ENCODE measurements at regions of chr13 and their contacts with region 1.

Region 1: GRCh38 chr13:33004511-33004910 is 11.7 kb upstream of the KL start:
- DNase-seq: peak; percentile 32
- H3K4me3 ChIP-seq: no peak overlapping the region
- H3K27ac ChIP-seq: no peak overlapping the region
- H3K4me1 ChIP-seq: peaks cover 4% of the 10 kb centered on the region
- H3K27me3 ChIP-seq: peaks cover 0 to 9% of the 10 kb centered on the region in 2 experiments
- CTCF ChIP-seq: no peak
- POLR2A ChIP-seq: no peak

Region 2: GRCh38 chr13:33017323-33017929 is 12.9 kb after region 1 on chr13:
- CTCF ChIA-PET with region 1: interaction called, 3 read pairs
- POLR2A ChIA-PET with region 1: no interaction called
- dilution Hi-C with region 1: no loop called
- intact Hi-C with region 1: loop called (anchors 1 kb)
- DNase-seq: peak; percentile 30
- H3K4me3 ChIP-seq: no peak overlapping the region
- H3K27ac ChIP-seq: no peak overlapping the region
- H3K4me1 ChIP-seq: peaks cover 8% of the 10 kb centered on the region
- H3K27me3 ChIP-seq: peaks cover 46 to 70% of the 10 kb centered on the region in 2 experiments
- CTCF ChIP-seq: peak; percentile 29 to 32
- POLR2A ChIP-seq: no peak

Region 3: DNA sequence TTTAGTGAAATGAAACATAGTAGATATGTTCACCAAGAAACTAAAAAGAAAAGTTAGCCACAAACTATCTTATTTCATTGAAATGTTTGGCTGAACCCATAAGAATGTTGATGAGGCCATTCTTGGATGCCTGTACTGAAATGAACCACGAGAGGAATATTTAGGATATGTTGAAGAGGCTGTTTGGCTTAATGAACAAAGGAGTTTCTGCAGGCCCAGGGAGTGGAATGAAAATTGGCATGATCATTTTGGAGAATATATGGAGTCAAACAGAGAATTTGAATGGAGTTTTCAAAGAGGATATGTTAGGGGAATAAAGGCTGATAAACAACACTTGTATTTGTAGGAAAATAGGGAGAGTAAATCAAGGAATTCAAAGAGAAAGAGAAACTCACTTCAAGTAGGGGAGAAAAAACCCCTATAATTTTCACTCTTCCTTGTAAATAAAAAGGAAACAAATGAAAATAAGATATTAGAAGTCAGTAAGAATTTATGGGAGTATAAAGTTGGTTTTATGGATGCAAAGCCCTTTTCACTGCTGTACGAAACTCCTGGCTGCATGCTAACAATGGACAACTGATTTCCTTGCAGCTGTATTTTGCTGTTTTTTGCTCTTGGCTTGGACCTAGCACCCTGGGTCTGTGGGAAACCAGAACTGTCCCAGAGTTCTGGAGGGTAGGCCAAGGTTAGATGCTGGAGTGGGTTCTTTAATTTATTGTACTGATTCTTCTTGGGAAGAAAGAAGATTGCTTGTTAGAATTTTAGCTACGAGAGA is 48.2 kb after region 1 on chr13:
- CTCF ChIA-PET with region 1: no interaction called
- POLR2A ChIA-PET with region 1: no interaction called
- dilution Hi-C with region 1: no loop called
- intact Hi-C with region 1: no loop called
- DNase-seq: no peak
- H3K4me3 ChIP-seq: no peak overlapping the region
- H3K27ac ChIP-seq: no peak overlapping the region
- H3K4me1 ChIP-seq: no peaks in the 10 kb centered on the region
- H3K27me3 ChIP-seq: peaks cover 4 to 18% of the 10 kb centered on the region in 2 experiments
- CTCF ChIP-seq: no peak
- POLR2A ChIP-seq: no peak

Measured in endothelial cell of umbilical vein (primary cell).